Activated naive CD4-positive, alpha-beta T cell treated with anti-CD3 and anti-CD28 coated beads for 36 hours (primary cell): ENCODE measurements at regions of chr2 and their contacts with region 1.

Region 1: DNA sequence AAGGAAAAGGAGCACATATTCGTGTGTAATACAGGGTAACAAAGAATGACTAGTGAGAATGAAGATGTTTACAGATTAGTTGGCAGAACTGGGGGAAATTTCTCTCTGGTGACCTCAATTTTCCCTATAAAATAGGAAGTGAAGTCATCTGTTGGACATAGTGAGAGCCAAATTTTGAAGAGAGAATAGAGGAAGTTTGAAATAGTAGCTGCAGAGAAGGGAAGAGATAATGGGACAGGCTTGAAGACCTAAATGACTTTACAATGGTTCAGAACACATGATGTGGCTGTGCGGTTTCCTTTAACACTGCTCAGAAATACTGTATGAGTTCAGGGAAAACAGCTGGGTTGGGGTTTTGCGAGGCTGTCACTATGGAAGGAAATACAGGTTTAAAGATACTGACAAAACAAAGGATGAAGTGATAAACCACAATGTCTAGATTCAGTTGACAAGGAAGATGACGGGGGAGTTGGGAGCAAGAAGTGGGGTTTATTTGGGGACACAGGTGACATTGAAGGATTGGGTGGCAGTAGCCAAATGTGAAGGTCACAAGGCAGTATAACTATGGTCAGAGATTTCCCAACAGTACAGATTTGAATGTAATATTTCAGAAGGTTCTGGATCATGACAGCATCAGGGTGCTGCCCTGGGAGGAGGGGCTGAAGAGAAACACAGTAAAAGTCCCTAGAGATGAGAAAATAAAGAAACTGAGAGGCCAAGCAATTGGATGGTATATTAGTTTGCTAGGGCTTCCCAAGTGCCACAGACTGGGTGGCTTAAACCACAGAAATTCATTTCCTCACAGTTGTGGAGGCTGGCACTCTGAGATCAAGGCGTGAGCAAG is 82.6 kb upstream of the TANK start:
- DNase-seq: peak; percentile 91
- H3K4me3 Mint-ChIP-seq: peak overlapping the region; percentile 34
- H3K27ac Mint-ChIP-seq: peak overlapping the region; percentile 92
- H3K4me1 Mint-ChIP-seq: peaks cover 41% of the 10 kb centered on the region
- H3K27me3 Mint-ChIP-seq: no peaks in the 10 kb centered on the region

Region 2: DNA sequence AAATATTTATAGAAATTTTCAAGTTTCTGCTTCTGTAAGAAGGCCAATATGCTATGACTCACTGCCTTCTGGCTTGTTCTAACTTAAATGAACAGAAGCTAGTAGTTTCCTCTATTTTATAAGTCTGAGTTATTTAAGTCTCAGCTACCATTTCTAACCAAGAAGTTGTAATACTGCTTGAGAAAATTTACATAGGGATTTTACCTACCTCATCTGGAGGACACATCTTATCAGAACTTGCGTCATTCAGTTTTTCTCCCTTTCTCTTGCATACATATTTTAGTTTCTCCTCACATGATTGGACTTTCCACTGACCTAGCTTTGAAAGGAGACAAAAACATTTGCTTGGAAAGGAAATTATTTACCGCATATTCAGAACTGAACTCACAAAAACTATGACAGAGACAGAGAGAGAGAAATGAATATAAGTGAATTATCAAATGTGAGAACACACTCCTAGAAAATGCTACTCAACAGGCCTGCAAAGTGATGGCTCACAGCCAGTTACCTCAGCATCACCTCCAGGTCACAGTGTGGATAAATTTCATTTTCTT is 1198.5 kb before region 1 on chr2:
- CTCF ChIA-PET with region 1: no interaction called
- intact Hi-C with region 1: loop called (anchors 1 kb)
- DNase-seq: peak; percentile 76
- H3K4me3 Mint-ChIP-seq: no peak overlapping the region
- H3K27ac Mint-ChIP-seq: peak overlapping the region; percentile 77
- H3K4me1 Mint-ChIP-seq: peaks cover 45% of the 10 kb centered on the region
- H3K27me3 Mint-ChIP-seq: no peaks in the 10 kb centered on the region

Region 3: DNA sequence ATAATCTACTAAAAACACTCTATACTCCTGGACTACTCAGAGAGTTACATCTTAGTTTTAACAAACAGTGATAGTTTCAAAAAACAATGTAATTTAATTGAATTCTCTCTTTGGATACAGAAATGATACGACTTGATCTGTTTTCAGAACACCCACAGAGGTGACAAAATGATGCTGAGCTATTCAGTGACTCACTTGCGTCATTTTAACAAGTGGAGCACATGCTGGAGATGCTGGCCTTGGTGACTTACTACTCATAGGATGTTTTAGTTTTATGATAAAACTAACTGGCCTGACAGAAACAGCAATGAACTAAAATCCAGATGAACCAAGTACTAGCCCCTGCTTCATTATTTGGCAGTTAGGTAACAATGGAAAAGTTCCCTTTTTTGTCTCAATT is 776.2 kb before region 1 on chr2:
- CTCF ChIA-PET with region 1: no interaction called
- intact Hi-C with region 1: loop called (anchors 1 kb)
- DNase-seq: peak; percentile 73
- H3K4me3 Mint-ChIP-seq: no peak overlapping the region
- H3K27ac Mint-ChIP-seq: peak overlapping the region; percentile 76
- H3K4me1 Mint-ChIP-seq: peaks cover 63% of the 10 kb centered on the region
- H3K27me3 Mint-ChIP-seq: no peaks in the 10 kb centered on the region

Region 4: GRCh38 chr2:160582490-160583145 is 495.0 kb before region 1 on chr2:
- CTCF ChIA-PET with region 1: no interaction called
- intact Hi-C with region 1: no loop called
- DNase-seq: no peak
- H3K4me3 Mint-ChIP-seq: no peak overlapping the region
- H3K27ac Mint-ChIP-seq: no peak overlapping the region
- H3K4me1 Mint-ChIP-seq: peaks cover 11% of the 10 kb centered on the region
- H3K27me3 Mint-ChIP-seq: no peaks in the 10 kb centered on the region

Region 5: DNA sequence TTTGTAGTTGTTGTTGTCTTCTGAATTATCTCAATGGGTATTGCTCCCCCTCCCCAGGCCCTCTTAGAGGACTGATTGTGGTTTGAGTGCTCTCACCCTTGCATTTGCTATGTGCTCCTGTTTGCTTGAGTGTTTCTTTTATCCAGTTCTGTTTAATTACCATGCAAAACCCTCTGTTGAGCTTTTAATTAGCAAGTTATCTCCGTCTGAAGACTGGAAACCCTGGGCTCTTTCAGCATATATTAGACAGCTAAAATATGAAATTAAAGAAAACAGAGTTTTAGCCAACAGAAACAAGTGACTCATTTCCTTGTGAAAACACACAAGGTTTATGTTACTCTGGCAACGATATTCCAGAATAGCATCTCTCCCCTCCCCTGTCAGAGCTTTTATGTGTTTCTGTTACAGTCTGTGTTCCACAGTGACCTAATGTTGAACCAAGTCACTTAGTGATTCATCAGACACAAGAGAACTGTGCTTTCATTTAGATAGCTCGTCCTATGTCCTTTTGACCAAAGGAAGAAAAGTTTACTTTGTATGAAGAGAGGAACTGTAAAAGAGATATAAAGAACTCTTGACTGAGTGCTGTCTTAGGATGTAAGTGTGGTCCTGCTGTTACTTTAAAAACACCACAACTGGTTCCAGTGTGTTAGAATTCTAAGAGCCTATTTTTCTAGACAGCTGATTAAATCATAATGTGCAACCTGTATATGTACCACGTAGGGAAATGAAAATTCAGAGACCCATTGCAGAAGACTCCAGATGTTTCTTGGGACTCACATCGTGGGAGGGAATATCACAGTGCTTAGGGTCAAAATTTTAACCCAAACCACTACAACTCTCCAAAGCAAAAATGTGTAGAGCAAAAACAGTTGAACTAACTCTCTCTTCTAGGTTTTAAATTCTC is 411.2 kb before region 1 on chr2:
- CTCF ChIA-PET with region 1: no interaction called
- intact Hi-C with region 1: loop called (anchors 1 kb)
- DNase-seq: no peak
- H3K4me3 Mint-ChIP-seq: no peak overlapping the region
- H3K27ac Mint-ChIP-seq: no peak overlapping the region
- H3K4me1 Mint-ChIP-seq: peaks cover 19% of the 10 kb centered on the region
- H3K27me3 Mint-ChIP-seq: no peaks in the 10 kb centered on the region

Region 6: DNA sequence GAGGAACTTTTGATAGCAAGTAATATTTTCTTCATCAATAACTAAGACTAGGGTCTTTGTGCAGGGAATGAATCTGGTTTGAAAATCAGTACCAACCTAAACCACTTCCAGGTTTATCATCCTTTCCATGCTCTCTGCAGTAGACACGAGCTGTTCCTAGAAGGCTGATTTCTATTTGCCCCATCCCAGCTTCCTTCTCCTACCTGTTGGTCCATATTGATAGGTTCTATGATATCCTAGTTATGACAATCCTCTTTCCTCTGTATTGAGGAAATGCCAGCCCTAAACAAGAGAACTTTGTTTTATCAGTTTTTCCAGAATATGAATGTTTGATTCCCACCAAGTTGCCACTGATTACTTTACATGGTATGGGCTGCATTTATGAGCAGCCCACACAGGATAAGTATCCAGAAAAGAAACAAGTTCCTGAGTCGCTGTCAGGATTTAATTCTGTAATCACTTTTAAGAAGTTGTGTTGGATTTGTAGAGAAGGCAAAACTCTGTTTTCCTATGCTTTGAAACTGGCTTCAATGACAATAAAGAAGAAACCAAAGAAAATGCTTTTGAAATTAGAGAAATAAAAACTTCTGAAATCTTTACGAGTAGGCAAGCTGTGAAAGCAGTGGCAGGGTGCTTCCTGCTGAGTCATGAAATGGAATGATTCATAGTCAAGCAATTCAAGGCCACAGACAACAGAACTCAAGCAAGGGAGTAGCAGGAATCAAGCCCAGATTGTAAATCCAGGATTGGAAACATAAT is 45.4 kb after region 1 on chr2:
- CTCF ChIA-PET with region 1: no interaction called
- intact Hi-C with region 1: loop called (anchors 1 kb)
- DNase-seq: peak; percentile 70
- H3K4me3 Mint-ChIP-seq: no peak overlapping the region
- H3K27ac Mint-ChIP-seq: peak overlapping the region; percentile 3
- H3K4me1 Mint-ChIP-seq: peaks cover 20% of the 10 kb centered on the region
- H3K27me3 Mint-ChIP-seq: peaks cover 3% of the 10 kb centered on the region

Region 7: DNA sequence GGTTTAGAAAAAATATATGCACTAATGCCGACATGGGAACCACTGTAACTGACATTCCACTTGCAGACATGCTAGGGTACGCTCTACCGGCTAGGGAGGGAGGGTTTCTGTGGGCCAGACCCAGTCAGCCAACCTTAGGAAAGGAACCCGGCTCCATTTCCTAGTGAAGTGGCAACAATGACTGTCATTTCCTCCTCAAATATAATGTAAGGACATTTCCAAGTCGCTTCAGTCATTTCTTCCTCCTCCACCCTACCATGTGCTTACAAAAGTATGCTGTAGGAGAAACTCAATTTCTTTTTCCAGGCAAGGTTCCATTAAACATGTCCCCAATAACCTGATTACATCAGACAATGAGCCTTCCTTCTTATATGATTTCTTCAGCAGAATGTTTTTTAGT is 166.3 kb after region 1 on chr2:
- CTCF ChIA-PET with region 1: no interaction called
- intact Hi-C with region 1: loop called (anchors 1 kb)
- DNase-seq: peak; percentile 37
- H3K4me3 Mint-ChIP-seq: peak overlapping the region; percentile 87
- H3K27ac Mint-ChIP-seq: peak overlapping the region; percentile 95
- H3K4me1 Mint-ChIP-seq: peaks cover 50% of the 10 kb centered on the region
- H3K27me3 Mint-ChIP-seq: no peaks in the 10 kb centered on the region

Region 8: DNA sequence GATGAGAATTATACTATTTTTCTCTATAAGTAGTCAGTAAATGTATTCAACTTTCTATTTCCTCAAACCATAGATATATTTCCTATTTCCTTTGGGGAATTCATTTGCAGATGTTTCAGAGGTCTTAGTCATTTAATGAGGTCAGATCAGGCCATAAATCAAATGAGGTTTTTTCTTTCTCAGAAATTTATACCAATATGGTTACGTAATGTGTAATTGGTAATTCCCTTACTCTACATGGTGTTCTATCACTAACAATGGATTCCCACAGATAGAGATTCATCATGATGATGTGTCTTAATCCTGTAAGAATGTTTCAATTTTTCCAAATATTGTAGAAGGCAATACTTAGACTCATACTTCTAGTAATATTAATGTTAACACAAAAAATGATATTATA is 888.4 kb after region 1 on chr2:
- CTCF ChIA-PET with region 1: no interaction called
- intact Hi-C with region 1: loop called (anchors 2 kb)
- DNase-seq: no peak
- H3K4me3 Mint-ChIP-seq: no peak overlapping the region
- H3K27ac Mint-ChIP-seq: no peak overlapping the region
- H3K4me1 Mint-ChIP-seq: peaks cover 28% of the 10 kb centered on the region
- H3K27me3 Mint-ChIP-seq: no peaks in the 10 kb centered on the region